ENCODE measurements at regions of chr10 and their contacts with region 1.

Region 1: GRCh38 chr10:131900350-131901146 is at the start of gene PPP2R2D:
- DNase-seq: peak; percentile 90
- ATAC-seq: peak; percentile 89
- H3K4me3 ChIP-seq: peak within 1 kb of the TSS; percentile 77
- H3K27ac ChIP-seq: peak within 1 kb of the TSS; percentile 36; the same call in 1 of the 2 replicates
- H3K4me1 ChIP-seq: peaks cover 25% of the 10 kb centered on the region
- H3K27me3 ChIP-seq: no peaks in the 10 kb centered on the region
- CTCF ChIP-seq: no peak
- total RNA-seq, gene PPP2R2D: 30.6 and 40.3 TPM in 2 replicates

Region 2: GRCh38 chr10:131943021-131943814 is 42.7 kb after region 1 on chr10:
- CTCF ChIA-PET with region 1: no interaction called
- POLR2A ChIA-PET with region 1: no interaction called
- intact Hi-C with region 1: loop called (anchors 5 kb)
- DNase-seq: peak; percentile 20
- ATAC-seq: no peak
- H3K4me3 ChIP-seq: no peak overlapping the region
- H3K27ac ChIP-seq: no peak overlapping the region
- H3K4me1 ChIP-seq: peaks cover 43% of the 10 kb centered on the region
- H3K27me3 ChIP-seq: no peaks in the 10 kb centered on the region
- CTCF ChIP-seq: peak; percentile 60

Measured in PC-3 (cell line).